Endothelial cell of umbilical vein (primary cell): ENCODE measurements at regions of chr1 and their contacts with region 1.

Region 1: GRCh38 chr1:156096640-156097391 is 14.6 kb upstream of the MEX3A start:
- DNase-seq: peak; percentile 93
- H3K4me3 ChIP-seq: no peak overlapping the region
- H3K27ac ChIP-seq: peak overlapping the region; percentile 92
- H3K4me1 ChIP-seq: peaks cover 36% of the 10 kb centered on the region
- H3K27me3 ChIP-seq: no peaks in the 10 kb centered on the region
- CTCF ChIP-seq: peak; percentile 96 to 99
- POLR2A ChIP-seq: peak; percentile 65

Region 2: GRCh38 chr1:156082309-156083091 is 14.3 kb before region 1 on chr1 and contains the start of gene MEX3A:
- CTCF ChIA-PET with region 1: interaction called, 10 read pairs
- POLR2A ChIA-PET with region 1: no interaction called
- dilution Hi-C with region 1: no loop called
- intact Hi-C with region 1: no loop called
- DNase-seq: peak; percentile 87
- H3K4me3 ChIP-seq: peak within 1 kb of the TSS; percentile 88 to 97 (median 91)
- H3K27ac ChIP-seq: peak within 1 kb of the TSS; percentile 52
- H3K4me1 ChIP-seq: peaks cover 30% of the 10 kb centered on the region
- H3K27me3 ChIP-seq: no peaks in the 10 kb centered on the region
- CTCF ChIP-seq: no peak
- POLR2A ChIP-seq: peak; percentile 67
- total RNA-seq, gene MEX3A: 23.6 and 26.6 TPM in 2 replicates

Region 3: GRCh38 chr1:156114101-156114916 is 17.5 kb after region 1 on chr1 and contains the start of gene LMNA:
- CTCF ChIA-PET with region 1: interaction called, 283 read pairs
- POLR2A ChIA-PET with region 1: interaction called, 14 read pairs
- dilution Hi-C with region 1: no loop called
- intact Hi-C with region 1: loop called (anchors 1 kb)
- DNase-seq: peak; percentile 92
- H3K4me3 ChIP-seq: peak within 1 kb of the TSS; percentile 40 to 97 (median 78)
- H3K27ac ChIP-seq: peak within 1 kb of the TSS; percentile 73
- H3K4me1 ChIP-seq: peaks cover 24% of the 10 kb centered on the region
- H3K27me3 ChIP-seq: no peaks in the 10 kb centered on the region
- CTCF ChIP-seq: no peak
- POLR2A ChIP-seq: peak; percentile 98
- total RNA-seq, gene LMNA: 715 and 742 TPM in 2 replicates

Region 4: GRCh38 chr1:156123356-156124196 is 26.8 kb after region 1 on chr1:
- CTCF ChIA-PET with region 1: interaction called, 627 read pairs
- POLR2A ChIA-PET with region 1: interaction called, 3 read pairs
- dilution Hi-C with region 1: no loop called
- intact Hi-C with region 1: loop called (anchors 1 kb)
- DNase-seq: peak; percentile 99
- H3K4me3 ChIP-seq: peak overlapping the region in 1 of 3 experiments; percentile 39
- H3K27ac ChIP-seq: peak overlapping the region; percentile 97
- H3K4me1 ChIP-seq: peaks cover 87% of the 10 kb centered on the region
- H3K27me3 ChIP-seq: no peaks in the 10 kb centered on the region
- CTCF ChIP-seq: peak in 1 of 2 donors; percentile 22
- POLR2A ChIP-seq: peak; percentile 21

Region 5: GRCh38 chr1:156140879-156141252 is 44.0 kb after region 1 on chr1:
- CTCF ChIA-PET with region 1: interaction called, 627 read pairs
- POLR2A ChIA-PET with region 1: no interaction called
- dilution Hi-C with region 1: no loop called
- intact Hi-C with region 1: no loop called
- DNase-seq: no peak
- H3K4me3 ChIP-seq: no peak overlapping the region
- H3K27ac ChIP-seq: no peak overlapping the region
- H3K4me1 ChIP-seq: no peaks in the 10 kb centered on the region
- H3K27me3 ChIP-seq: no peaks in the 10 kb centered on the region
- CTCF ChIP-seq: no peak
- POLR2A ChIP-seq: no peak